Aorta (tissue), 5 donors: ENCODE measurements at regions of chr20 and their contacts with region 1.

Region 1: DNA sequence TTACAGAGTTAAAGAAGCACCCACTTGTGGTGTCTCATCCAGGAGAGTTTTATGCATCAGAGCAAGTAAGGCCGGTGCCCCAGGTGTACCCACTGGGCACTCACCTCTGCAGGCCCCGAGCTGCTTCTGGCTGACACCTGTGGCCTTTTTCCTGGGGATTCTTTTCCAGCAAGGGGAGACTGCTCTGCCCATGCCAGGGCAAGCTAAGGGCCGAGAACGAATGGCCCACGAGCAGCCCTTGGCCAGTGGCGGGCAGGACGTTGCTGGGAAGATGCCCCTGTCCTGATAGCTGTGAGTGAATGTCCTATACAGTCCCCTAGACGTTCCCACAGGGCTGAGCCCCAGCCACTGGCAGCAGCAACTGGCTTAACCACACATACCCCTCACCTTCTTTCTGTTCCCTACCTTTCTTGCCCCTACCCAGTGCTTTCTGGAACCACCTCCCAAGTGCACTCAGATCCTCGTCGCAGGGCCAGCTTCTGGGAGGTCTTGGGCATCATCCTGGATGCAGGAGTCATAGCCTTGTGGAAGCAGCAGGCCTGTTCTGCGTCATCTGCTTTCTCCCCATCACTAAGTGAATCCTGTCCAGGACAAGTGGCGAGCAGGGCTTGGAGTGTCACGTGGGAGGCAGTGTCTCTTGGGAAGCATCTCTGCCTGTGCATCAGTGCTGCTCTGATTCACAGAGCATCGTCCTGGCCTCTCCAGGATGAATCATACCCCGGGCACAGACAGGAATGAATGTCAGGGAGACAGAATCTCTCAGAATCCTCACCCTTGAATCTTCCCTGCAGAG is 32.5 kb downstream of the SYNDIG1 start:
- DNase-seq: peak; percentile 73 to 81
- ATAC-seq: peak; percentile 73
- H3K4me3 ChIP-seq: no peak overlapping the region
- H3K27ac ChIP-seq: no peak overlapping the region
- H3K4me1 ChIP-seq: no peaks in the 10 kb centered on the region
- H3K27me3 ChIP-seq: no peaks in the 10 kb centered on the region

Region 2: GRCh38 chr20:24651171-24651975 is 149.4 kb after region 1 on chr20:
- intact Hi-C with region 1: loop called in 1 of 2 experiments (anchors 10 kb)
- DNase-seq: no peak
- ATAC-seq: no peak
- H3K4me3 ChIP-seq: no peak overlapping the region
- H3K27ac ChIP-seq: no peak overlapping the region
- H3K4me1 ChIP-seq: no peaks in the 10 kb centered on the region
- H3K27me3 ChIP-seq: no peaks in the 10 kb centered on the region